Endothelial cell of umbilical vein (primary cell): ENCODE measurements at regions of chr1 and their contacts with region 1.

Region 1: DNA sequence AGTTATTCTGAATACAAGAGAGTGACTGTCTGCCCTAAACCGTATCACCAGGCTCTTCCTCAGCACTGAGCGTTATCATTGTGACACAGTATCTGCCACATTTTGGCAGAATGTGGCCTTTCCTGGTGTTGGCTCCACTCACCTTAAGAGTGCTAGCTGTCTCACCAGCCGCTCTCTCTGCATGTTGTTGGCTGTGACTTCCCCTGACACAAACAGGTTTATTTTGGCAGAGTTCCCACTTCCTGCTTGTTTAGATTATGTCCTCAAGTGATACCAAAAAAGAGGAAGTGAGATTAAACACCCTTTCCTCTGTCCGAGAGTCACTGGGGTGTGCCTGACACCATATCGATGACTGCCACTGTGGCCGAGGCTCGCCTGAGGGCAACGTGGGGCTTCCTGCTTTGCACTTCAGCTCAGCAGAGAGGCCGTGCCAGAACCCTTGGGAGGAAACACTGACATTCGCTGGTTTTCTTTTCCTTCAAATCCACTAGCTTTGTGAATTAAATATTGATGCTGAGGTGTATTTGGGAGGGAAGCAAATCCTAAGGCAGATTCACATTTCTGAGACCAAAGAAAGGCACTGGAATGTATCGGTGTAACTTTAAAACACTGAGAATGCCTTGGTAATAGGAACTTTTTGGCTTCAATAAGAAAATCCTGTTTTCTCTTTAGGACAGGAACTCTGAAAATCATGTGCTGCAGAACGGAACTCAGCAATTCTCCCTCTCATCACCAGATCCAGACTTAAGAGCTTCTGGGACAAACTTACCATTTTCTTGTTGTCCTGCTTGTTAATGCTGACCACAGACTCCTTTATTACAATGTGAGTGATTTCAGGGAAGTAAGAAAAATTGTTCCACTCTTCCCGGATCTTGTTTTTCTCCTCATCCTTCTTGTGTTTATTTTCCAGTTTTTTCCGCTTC is 102.1 kb downstream of the JAK1 start:
- DNase-seq: peak; percentile 90
- H3K4me3 ChIP-seq: no peak overlapping the region
- H3K27ac ChIP-seq: peak overlapping the region; percentile 68
- H3K4me1 ChIP-seq: peaks cover 31% of the 10 kb centered on the region
- H3K27me3 ChIP-seq: no peaks in the 10 kb centered on the region
- CTCF ChIP-seq: no peak
- POLR2A ChIP-seq: peak; percentile 52

Region 2: GRCh38 chr1:64886877-64887276 is 22.6 kb after region 1 on chr1:
- CTCF ChIA-PET with region 1: no interaction called
- POLR2A ChIA-PET with region 1: no interaction called
- dilution Hi-C with region 1: no loop called
- intact Hi-C with region 1: no loop called
- DNase-seq: no peak
- H3K4me3 ChIP-seq: no peak overlapping the region
- H3K27ac ChIP-seq: no peak overlapping the region
- H3K4me1 ChIP-seq: peaks cover 30% of the 10 kb centered on the region
- H3K27me3 ChIP-seq: no peaks in the 10 kb centered on the region
- CTCF ChIP-seq: no peak
- POLR2A ChIP-seq: no peak

Region 3: DNA sequence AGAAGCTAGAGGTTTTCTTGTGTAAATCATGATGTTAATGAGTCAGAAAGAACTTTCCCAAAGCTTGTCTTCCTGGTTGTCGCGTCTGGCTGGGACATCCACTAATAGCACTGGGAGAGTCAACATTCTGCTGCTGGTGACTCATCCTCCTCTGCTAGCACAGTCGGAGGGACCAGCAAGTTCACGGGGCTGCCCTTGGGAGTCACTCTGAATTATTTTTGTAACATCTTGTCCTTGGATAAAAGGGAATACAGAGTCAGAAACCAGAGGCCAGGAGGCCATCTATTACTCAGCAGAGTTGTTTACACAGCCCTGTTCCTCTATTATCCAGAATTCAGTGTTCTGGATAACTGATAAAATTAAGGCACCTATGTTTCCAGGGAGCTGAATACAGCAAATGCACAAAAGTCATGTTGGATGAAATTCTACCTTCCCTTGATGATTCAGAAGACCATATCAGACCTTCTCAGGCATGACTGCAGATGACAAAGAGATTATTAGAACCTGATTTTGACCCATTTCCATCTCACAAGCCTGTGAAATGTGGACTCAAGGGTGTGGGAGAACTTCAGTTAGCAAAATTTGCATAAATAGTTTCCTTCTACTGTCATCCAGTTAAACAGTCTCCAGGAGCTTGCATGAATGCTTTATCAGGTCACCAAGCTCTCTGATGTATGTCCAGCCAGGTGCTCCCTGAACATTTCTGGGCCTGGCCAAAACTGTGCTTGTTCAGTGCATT is 34.0 kb after region 1 on chr1:
- CTCF ChIA-PET with region 1: interaction called, 6 read pairs
- POLR2A ChIA-PET with region 1: interaction called, 4 read pairs
- dilution Hi-C with region 1: no loop called
- intact Hi-C with region 1: loop called (anchors 1 kb)
- DNase-seq: peak; percentile 98
- H3K4me3 ChIP-seq: peak overlapping the region in 1 of 3 experiments; percentile 32
- H3K27ac ChIP-seq: peak overlapping the region; percentile 97
- H3K4me1 ChIP-seq: peaks cover 42% of the 10 kb centered on the region
- H3K27me3 ChIP-seq: no peaks in the 10 kb centered on the region
- CTCF ChIP-seq: no peak
- POLR2A ChIP-seq: peak; percentile 55

Region 4: GRCh38 chr1:64917328-64917861 is 53.1 kb after region 1 on chr1:
- CTCF ChIA-PET with region 1: interaction called, 3 read pairs
- POLR2A ChIA-PET with region 1: no interaction called
- dilution Hi-C with region 1: no loop called
- intact Hi-C with region 1: loop called (anchors 1 kb)
- DNase-seq: peak; percentile 91
- H3K4me3 ChIP-seq: peak overlapping the region in 1 of 3 experiments; percentile 6
- H3K27ac ChIP-seq: peak overlapping the region; percentile 86
- H3K4me1 ChIP-seq: peaks cover 54% of the 10 kb centered on the region
- H3K27me3 ChIP-seq: no peaks in the 10 kb centered on the region
- CTCF ChIP-seq: no peak
- POLR2A ChIP-seq: no peak

Region 5: GRCh38 chr1:65002508-65003315 is 138.4 kb after region 1 on chr1:
- CTCF ChIA-PET with region 1: no interaction called
- POLR2A ChIA-PET with region 1: no interaction called
- dilution Hi-C with region 1: no loop called
- intact Hi-C with region 1: loop called (anchors 2 kb)
- DNase-seq: peak; percentile 82
- H3K4me3 ChIP-seq: peak overlapping the region; percentile 13 to 55 (median 46)
- H3K27ac ChIP-seq: peak overlapping the region; percentile 69
- H3K4me1 ChIP-seq: peaks cover 15% of the 10 kb centered on the region
- H3K27me3 ChIP-seq: no peaks in the 10 kb centered on the region
- CTCF ChIP-seq: no peak
- POLR2A ChIP-seq: peak; percentile 40

Region 6: DNA sequence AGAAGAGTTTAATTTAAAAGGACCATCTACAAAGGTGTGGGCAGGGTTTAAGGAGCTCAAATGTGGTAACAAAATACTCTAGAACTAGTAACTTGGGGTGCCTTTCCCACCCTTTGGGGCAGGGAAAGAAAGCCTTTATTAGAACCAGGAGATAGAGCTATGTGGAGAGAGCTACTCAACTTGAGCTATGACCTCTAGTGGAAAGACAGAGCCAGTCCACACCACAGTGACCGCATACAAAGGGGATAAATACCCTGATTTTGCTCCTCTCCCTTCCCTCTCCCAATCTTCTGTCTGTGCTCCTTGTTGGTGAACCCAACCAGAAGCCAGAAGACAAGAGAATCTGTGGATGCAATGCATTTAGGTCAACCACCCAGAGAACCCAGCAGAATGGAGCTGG is 156.5 kb after region 1 on chr1:
- CTCF ChIA-PET with region 1: interaction called, 19 read pairs
- POLR2A ChIA-PET with region 1: no interaction called
- dilution Hi-C with region 1: no loop called
- intact Hi-C with region 1: loop called (anchors 2 kb)
- DNase-seq: peak; percentile 14
- H3K4me3 ChIP-seq: no peak overlapping the region
- H3K27ac ChIP-seq: no peak overlapping the region
- H3K4me1 ChIP-seq: no peaks in the 10 kb centered on the region
- H3K27me3 ChIP-seq: no peaks in the 10 kb centered on the region
- CTCF ChIP-seq: peak; percentile 13 to 33
- POLR2A ChIP-seq: no peak

Region 7: GRCh38 chr1:65067491-65068201 is 203.4 kb after region 1 on chr1:
- CTCF ChIA-PET with region 1: interaction called, 3 read pairs
- POLR2A ChIA-PET with region 1: no interaction called
- dilution Hi-C with region 1: no loop called
- intact Hi-C with region 1: loop called (anchors 2 kb)
- DNase-seq: peak; percentile 84
- H3K4me3 ChIP-seq: peak overlapping the region; percentile 48 to 88 (median 85)
- H3K27ac ChIP-seq: peak overlapping the region; percentile 82
- H3K4me1 ChIP-seq: peaks cover 14% of the 10 kb centered on the region
- H3K27me3 ChIP-seq: no peaks in the 10 kb centered on the region
- CTCF ChIP-seq: no peak
- POLR2A ChIP-seq: no peak